ENCODE measurements at regions of chr17 and their contacts with region 1.

Region 1: GRCh38 chr17:55717898-55718735 is 4.5 kb downstream of the TMEM100 start:
- DNase-seq: peak; percentile 82
- ATAC-seq: peak; percentile 69
- H3K4me3 Mint-ChIP-seq: no peak overlapping the region
- H3K27ac Mint-ChIP-seq: no peak overlapping the region
- H3K4me1 Mint-ChIP-seq: peaks cover 22% of the 10 kb centered on the region
- H3K27me3 Mint-ChIP-seq: no peaks in the 10 kb centered on the region
- CTCF ChIP-seq: peak; percentile 54; the same call in 1 of the 2 replicates

Region 2: DNA sequence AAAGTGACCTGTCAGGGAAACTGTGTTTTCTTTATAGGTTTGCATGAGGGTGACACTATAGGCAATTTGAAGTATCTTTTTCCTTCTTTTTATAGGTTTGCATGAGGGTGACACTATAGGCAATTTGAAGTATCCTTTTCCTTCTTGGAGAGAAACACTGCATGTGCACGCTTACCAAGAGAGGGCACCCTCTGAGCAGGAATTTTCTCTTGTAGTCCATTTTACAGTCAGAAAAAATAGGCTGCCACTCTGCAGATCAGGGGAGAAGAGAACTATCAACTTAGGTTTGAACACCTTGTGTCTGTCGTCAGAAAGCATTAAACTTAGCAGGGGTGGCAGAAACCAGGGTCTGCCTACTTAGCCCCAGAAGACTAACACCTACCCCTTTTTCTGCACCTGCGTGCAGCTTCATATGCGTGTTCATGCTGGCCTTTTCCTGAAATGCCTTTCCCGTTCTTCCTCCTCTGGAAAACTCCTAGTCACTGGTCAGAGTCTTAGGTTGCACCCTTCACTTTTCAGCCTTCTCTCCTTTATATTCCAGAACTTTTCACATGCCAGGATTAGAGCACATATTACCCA is 190.5 kb before region 1 on chr17:
- CTCF ChIA-PET with region 1: interaction called, 12 read pairs
- POLR2A ChIA-PET with region 1: no interaction called
- DNase-seq: peak; percentile 34
- ATAC-seq: peak; percentile 87
- H3K4me3 Mint-ChIP-seq: no peak overlapping the region
- H3K27ac Mint-ChIP-seq: no peak overlapping the region
- H3K4me1 Mint-ChIP-seq: no peaks in the 10 kb centered on the region
- H3K27me3 Mint-ChIP-seq: no peaks in the 10 kb centered on the region
- CTCF ChIP-seq: no peak

Region 3: GRCh38 chr17:55601874-55602364 is 116.2 kb before region 1 on chr17:
- CTCF ChIA-PET with region 1: interaction called, 12 read pairs
- POLR2A ChIA-PET with region 1: no interaction called
- DNase-seq: peak; percentile 21
- ATAC-seq: peak; percentile 99
- H3K4me3 Mint-ChIP-seq: no peak overlapping the region
- H3K27ac Mint-ChIP-seq: peak overlapping the region; percentile 42; the same call in 1 of the 2 replicates
- H3K4me1 Mint-ChIP-seq: peaks cover 11% of the 10 kb centered on the region
- H3K27me3 Mint-ChIP-seq: no peaks in the 10 kb centered on the region
- CTCF ChIP-seq: peak; percentile 58

Region 4: DNA sequence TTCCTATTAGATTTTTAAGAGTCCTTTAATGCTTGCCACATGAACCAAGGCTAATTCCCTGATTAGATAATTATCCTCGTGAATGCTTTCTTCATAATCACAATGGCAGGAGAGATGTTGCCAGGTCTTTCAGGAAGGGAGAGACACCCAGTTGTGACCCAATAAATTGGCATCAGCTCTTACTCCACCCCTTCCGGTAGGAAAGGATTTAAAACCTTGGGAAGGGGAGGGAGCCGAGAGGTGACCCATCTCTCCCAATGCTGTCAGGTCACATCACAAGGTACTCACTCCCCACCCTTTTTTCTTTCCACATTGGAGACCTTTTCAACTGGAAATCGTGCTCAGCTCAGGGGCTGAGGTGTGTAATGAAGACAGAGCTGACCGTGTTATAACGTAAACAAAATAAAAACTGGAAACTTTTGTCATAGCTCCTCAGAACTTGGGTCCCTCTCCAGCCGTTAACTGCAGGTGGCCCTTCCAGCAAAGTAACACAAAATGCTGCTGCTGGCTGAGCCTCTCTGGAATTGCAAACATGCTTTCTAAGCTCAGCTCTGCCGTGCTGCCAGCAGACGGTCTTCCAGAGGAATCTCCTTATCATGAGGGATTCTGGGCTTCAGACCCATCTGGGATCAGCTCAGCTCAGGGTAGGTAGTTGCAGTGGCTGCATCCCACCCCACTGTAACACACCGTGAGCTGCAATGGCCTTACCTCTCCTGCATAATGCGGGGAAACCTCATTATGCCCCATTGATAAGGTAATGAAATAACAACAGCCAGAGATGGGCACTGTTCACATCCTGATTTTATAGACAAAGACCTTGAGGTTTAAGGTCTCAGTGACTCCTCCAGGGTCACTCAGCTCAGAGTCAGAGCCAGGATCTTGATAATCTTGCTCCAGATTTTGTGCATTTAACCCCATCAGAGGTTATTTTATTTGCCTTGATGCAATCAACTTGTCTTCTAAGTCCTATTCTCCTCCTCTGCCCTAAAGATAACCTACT is 11.0 kb before region 1 on chr17:
- CTCF ChIA-PET with region 1: interaction called, 20 read pairs
- POLR2A ChIA-PET with region 1: no interaction called
- DNase-seq: peak; percentile 12
- ATAC-seq: peak; percentile 87
- H3K4me3 Mint-ChIP-seq: peak overlapping the region; percentile 33
- H3K27ac Mint-ChIP-seq: peak overlapping the region; percentile 87
- H3K4me1 Mint-ChIP-seq: peaks cover 33% of the 10 kb centered on the region
- H3K27me3 Mint-ChIP-seq: no peaks in the 10 kb centered on the region
- CTCF ChIP-seq: no peak

Region 5: GRCh38 chr17:55735731-55736405 is 17.8 kb after region 1 on chr17:
- CTCF ChIA-PET with region 1: interaction called, 13 read pairs
- POLR2A ChIA-PET with region 1: no interaction called
- DNase-seq: peak; percentile 24
- ATAC-seq: peak; percentile 46
- H3K4me3 Mint-ChIP-seq: no peak overlapping the region
- H3K27ac Mint-ChIP-seq: no peak overlapping the region
- H3K4me1 Mint-ChIP-seq: peaks cover 46% of the 10 kb centered on the region
- H3K27me3 Mint-ChIP-seq: no peaks in the 10 kb centered on the region
- CTCF ChIP-seq: peak; percentile 18; the same call in 1 of the 2 replicates

Region 6: GRCh38 chr17:55750750-55751657 is 32.9 kb after region 1 on chr17 and contains the start of gene PCTP:
- CTCF ChIA-PET with region 1: interaction called, 21 read pairs
- POLR2A ChIA-PET with region 1: interaction called, 3 read pairs
- DNase-seq: peak; percentile 96
- ATAC-seq: peak; percentile 97
- H3K4me3 Mint-ChIP-seq: peak within 1 kb of the TSS; percentile 88
- H3K27ac Mint-ChIP-seq: peak within 1 kb of the TSS; percentile 65; the same call in 1 of the 2 replicates
- H3K4me1 Mint-ChIP-seq: peaks cover 14% of the 10 kb centered on the region
- H3K27me3 Mint-ChIP-seq: no peaks in the 10 kb centered on the region
- CTCF ChIP-seq: no peak
- total RNA-seq, gene PCTP: 10.3 to 14.2 TPM (median 12.2 TPM) in 3 replicates

Region 7: GRCh38 chr17:55770148-55770870 is 52.2 kb after region 1 on chr17:
- CTCF ChIA-PET with region 1: interaction called, 10 read pairs
- POLR2A ChIA-PET with region 1: no interaction called
- DNase-seq: no peak
- ATAC-seq: peak; percentile 77
- H3K4me3 Mint-ChIP-seq: no peak overlapping the region
- H3K27ac Mint-ChIP-seq: no peak overlapping the region
- H3K4me1 Mint-ChIP-seq: peaks cover 4% of the 10 kb centered on the region; the same call in 1 of the 2 replicates
- H3K27me3 Mint-ChIP-seq: no peaks in the 10 kb centered on the region
- CTCF ChIP-seq: no peak

Region 8: GRCh38 chr17:55814377-55814776 is 96.3 kb after region 1 on chr17:
- CTCF ChIA-PET with region 1: no interaction called
- POLR2A ChIA-PET with region 1: no interaction called
- DNase-seq: no peak
- ATAC-seq: no peak
- H3K4me3 Mint-ChIP-seq: no peak overlapping the region
- H3K27ac Mint-ChIP-seq: no peak overlapping the region
- H3K4me1 Mint-ChIP-seq: no peaks in the 10 kb centered on the region
- H3K27me3 Mint-ChIP-seq: no peaks in the 10 kb centered on the region
- CTCF ChIP-seq: no peak

Measured in WTC11 (cell line).